ENCODE measurements at regions of chr4 and their contacts with region 1.

Region 1: DNA sequence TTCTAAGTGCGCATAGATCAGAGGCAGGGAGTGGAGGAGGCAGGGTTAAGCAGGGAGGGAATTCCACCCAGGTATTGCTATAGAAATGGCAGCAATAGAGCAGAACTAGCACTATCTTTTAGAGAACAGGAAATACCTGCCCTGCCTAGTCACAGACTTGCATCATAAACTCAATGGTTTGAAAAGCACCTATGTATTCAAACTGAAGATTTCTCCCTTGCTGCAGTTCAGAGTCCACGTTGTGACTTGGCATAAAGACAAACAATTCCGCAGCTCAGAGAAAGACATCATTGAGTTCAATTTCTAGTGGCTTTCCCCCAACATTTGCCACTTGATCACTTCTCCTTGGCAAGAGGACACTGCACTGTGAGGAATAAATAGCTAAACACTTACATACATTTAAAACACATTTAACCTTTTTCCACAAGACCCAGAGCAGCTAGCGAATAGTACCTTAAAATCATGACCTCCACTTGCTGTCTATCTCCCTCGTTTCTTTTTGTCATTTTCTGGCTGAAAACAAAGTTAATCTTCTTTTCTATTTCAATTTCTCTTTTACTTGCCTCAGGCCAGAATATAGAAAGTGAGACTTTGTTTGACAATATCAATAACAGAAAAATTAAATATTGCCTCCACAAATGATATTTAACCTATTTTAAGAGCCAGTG is 42.4 kb downstream of the SLC7A11 start:
- DNase-seq: no peak
- H3K4me3 Mint-ChIP-seq: no peak overlapping the region
- H3K27ac Mint-ChIP-seq: no peak overlapping the region
- H3K4me1 Mint-ChIP-seq: no peaks in the 10 kb centered on the region
- H3K27me3 Mint-ChIP-seq: no peaks in the 10 kb centered on the region

Region 2: DNA sequence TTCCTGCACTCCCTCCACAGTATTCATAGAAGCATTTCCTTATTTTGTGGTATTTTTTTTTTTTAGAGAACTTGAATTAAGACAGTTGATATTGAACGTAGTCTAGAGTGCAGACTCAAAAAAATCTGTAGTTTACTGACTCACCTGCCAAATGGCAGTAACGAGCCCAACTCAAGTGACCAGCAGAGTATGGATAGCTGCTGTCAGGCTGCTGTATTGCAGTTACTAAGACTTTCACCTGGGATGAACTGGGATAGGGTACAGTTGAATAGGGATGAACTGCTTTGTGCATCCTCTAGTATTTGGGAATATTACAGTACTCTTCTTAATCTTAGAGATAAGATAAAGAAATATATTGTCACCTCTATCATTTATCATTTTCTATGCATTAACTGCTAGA is 49.4 kb after region 1 on chr4:
- intact Hi-C with region 1: loop called (anchors 5 kb)
- DNase-seq: no peak
- H3K4me3 Mint-ChIP-seq: no peak overlapping the region
- H3K27ac Mint-ChIP-seq: no peak overlapping the region
- H3K4me1 Mint-ChIP-seq: no peaks in the 10 kb centered on the region
- H3K27me3 Mint-ChIP-seq: peaks cover 5% of the 10 kb centered on the region